Astrocyte of the cerebellum (primary cell): ENCODE measurements at regions of chr5 and their contacts with region 1.

Region 1: DNA sequence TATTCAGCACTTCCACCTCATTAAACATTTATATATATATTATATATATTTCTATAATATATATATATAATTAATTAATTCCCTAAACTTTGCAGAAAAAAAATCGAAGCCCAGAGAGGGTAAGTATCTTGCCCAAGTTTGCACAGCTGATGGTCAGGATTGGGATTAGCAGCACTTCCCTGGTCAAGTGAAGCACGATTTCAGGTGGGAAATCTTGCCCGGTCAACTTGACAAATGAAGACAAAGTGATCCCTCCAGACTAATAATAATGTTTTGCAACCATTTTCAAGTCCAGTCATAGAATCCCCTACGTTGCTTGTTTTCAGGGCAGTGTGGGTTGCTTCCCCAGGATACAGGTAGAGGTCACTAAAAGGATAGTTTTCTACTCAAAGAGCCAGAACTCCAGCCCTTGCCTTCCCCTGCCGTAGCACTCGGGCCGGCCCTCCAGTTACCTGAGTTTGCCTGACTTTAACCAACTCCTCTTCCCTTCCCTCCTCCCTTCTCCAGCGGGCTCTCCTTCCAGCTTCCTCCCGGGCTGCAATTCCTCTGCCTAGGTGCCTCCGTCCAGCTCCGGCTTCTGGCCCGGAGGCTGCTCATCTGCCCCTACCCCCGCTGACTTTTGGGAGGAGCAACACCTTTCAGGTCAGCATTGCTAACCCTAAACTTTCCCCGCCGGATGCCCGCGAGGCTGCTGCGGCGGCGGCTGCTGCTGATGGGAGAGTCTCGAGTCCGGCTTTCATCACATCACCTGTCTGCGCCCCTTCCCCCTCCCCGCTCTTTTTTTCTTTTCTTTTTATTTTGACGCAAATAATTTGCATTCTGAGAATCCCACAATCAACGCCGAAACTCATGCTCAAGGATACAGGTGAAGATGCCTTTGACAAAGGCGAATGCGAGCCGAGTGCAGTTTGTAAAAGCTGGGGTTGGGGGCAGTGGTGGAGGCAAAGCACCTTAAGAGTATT is 930 bp downstream of the PRLR start:
- DNase-seq: no peak
- H3K4me3 ChIP-seq: peak overlapping the region; percentile 27
- CTCF ChIP-seq: no peak

Region 2: DNA sequence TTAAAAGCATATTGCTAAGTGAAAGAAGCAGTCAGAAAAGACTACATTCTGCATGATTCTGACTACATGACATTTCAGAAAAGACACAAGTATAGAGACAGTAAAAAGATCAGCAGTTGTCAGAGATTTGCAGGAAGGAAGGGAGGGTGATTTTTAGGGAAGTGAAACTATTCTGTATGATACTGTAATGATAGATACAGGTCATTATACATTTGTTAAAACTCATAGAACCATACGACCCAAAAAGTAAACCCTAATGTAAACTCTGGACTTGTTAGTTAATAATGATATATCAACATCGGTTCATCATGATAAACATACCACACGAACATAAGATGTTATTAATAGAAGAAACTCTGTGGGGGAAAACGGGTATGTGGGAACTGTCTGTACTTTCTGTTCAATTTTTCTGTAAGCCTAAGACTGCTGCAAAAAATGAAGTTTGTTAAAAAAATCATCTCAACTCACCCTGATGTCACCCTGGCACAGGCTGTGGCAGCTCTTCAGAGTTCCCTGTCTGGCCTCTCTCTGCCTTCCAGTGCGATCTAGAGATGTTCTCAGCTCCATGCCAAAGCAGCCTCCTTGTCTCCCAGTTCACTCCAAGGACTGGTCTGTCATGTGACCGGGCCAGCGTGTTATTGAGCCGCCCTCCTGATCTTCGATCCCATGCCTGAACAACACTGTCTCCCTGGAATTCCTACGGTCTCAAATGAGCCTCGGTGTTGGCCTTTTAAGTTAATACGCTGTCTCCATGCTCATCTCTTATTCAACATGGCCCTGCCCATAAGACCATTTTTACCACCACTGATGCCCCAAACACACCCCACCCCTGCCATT is 34.5 kb before region 1 on chr5:
- in situ Hi-C with region 1: loop called (anchors 5 kb)
- DNase-seq: no peak
- H3K4me3 ChIP-seq: no peak overlapping the region
- CTCF ChIP-seq: no peak

Region 3: GRCh38 chr5:35274839-35275503 is 45.6 kb after region 1 on chr5:
- in situ Hi-C with region 1: no loop called
- DNase-seq: no peak
- H3K4me3 ChIP-seq: no peak overlapping the region
- CTCF ChIP-seq: no peak